Activated T-helper 1 cell treated with anti-CD3 and anti-CD28 coated beads, Interleukin-12 subunit alpha, Interleukin-12 subunit beta, Interleukin-2, Interleukin-4 antibody, amounts not matched to agents 30 ng/mL and 10 ng/mL and 1 ng/mL, durations not matched to agents 14 hours and 24 hours and 36 hours (primary cell): ENCODE measurements at regions of chr10 and their contacts with region 1.

Region 1: GRCh38 chr10:110210674-110211464 is 3.5 kb downstream of the MXI1 start:
- DNase-seq: peak; percentile 92
- H3K4me3 Mint-ChIP-seq: peak overlapping the region; percentile 96
- H3K27ac Mint-ChIP-seq: peak overlapping the region; percentile 95
- H3K4me1 Mint-ChIP-seq: peaks cover 70% of the 10 kb centered on the region
- H3K27me3 Mint-ChIP-seq: peaks cover 10% of the 10 kb centered on the region

Region 2: DNA sequence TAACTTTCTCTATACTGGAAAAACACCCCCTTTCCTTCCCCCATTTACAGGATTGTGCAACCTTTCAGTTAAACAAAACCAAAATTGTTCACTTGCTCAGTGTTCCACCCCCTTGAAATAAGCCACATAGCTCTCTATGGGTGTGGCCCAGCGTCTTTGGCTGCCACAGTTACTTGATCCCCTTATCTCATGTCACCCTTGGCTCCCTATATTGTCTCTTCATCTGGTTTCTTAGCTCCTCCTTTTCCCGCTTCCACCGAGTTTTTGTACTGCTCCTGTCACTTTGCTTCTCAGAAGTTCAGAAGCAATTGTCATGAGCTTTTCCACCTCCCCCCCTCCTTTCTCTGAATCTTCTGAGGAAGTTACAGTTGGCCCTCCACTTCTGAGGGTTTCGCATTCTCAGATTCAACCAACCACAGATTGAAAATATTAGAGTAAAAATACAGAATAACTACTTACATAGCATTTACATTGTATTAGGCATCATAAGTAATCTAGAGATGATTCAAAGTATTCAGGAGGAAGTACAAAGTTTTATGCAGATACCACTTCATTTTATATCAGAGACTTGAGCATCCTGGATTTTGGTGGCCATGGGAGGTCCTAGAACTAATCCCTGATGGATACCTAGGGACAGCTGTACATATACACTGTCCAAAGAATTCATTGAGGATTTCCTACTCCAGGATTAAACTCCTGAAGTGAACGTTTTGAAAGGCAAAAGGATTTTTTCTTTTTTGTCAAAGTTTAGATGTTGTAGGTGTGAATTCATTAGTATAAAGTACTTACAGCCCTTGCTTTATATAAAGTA is 142.7 kb before region 1 on chr10:
- intact Hi-C with region 1: loop called (anchors 2 kb)
- DNase-seq: peak; percentile 60
- H3K4me3 Mint-ChIP-seq: peak overlapping the region; percentile 80
- H3K27ac Mint-ChIP-seq: peak overlapping the region; percentile 96
- H3K4me1 Mint-ChIP-seq: peaks cover 93% of the 10 kb centered on the region
- H3K27me3 Mint-ChIP-seq: no peaks in the 10 kb centered on the region

Region 3: DNA sequence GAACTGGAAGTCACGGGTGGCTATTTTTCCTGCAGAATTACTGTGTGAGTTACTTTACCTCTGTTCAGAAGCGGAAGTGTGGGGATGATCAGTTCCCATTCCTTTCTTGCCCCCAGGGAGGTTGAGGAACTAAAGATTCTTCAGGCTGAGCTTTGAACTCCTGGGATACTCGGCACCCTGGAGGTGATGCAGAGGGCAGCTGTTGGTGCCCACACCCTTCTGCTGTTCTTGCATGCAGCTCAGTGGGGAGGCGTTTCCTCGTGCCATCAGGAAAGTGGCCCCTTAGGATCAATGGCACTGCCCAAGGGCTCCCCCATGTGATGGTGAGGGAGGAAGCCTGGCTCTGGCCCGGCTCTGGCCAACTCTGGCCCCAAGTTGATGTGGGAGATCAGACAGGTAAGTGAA is 48.1 kb before region 1 on chr10:
- intact Hi-C with region 1: loop called (anchors 1 kb)
- DNase-seq: no peak
- H3K4me3 Mint-ChIP-seq: no peak overlapping the region
- H3K27ac Mint-ChIP-seq: no peak overlapping the region
- H3K4me1 Mint-ChIP-seq: peaks cover 29% of the 10 kb centered on the region
- H3K27me3 Mint-ChIP-seq: peaks cover 82% of the 10 kb centered on the region

Region 4: GRCh38 chr10:110279407-110279986 is 68.6 kb after region 1 on chr10:
- intact Hi-C with region 1: loop called (anchors 1 kb)
- DNase-seq: peak; percentile 18
- H3K4me3 Mint-ChIP-seq: no peak overlapping the region
- H3K27ac Mint-ChIP-seq: no peak overlapping the region
- H3K4me1 Mint-ChIP-seq: peaks cover 20% of the 10 kb centered on the region
- H3K27me3 Mint-ChIP-seq: peaks cover 14% of the 10 kb centered on the region

Region 5: GRCh38 chr10:110425684-110426293 is 214.9 kb after region 1 on chr10:
- intact Hi-C with region 1: loop called (anchors 5 kb)
- DNase-seq: peak; percentile 53
- H3K4me3 Mint-ChIP-seq: peak overlapping the region; percentile 34
- H3K27ac Mint-ChIP-seq: peak overlapping the region; percentile 91
- H3K4me1 Mint-ChIP-seq: peaks cover 70% of the 10 kb centered on the region
- H3K27me3 Mint-ChIP-seq: no peaks in the 10 kb centered on the region